Posterior cingulate gyrus (tissue), 11 donors: ENCODE measurements at regions of chr6 and their contacts with region 1.

Region 1: GRCh38 chr6:42217519-42218367 is at the start of gene MRPS10:
- DNase-seq: peak; percentile 87 to 99 (median 94)

Region 2: DNA sequence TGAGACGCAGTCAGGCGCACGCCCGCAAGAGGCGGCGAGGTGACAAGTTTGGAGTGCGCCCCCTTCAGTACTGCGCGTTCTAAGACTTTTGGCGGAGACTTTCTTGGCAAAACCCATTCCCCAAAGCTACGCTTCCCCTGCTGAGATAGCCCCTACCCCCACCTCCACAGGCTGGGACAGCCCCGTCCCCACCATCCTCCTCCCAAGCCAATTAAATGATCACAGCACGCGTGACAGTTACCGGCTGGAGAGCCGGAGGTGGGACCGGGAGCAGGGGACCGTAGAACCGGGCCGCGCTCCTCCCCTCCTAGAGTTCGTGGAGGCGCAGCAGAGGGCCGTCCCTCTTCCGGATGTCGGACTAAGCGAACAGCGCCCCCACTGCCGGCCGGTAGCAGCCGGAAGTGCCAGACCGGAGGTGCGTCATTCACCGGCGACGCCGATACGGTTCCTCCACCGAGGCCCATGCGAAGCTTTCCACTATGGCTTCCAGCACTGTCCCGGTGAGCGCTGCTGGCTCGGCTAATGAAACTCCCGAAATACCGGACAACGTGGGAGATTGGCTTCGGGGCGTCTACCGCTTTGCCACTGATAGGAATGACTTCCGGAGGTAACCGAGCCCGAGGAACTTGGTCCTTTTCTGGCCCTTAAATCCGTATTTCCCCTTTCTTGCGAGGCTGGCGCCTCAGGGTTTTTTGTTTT is 430.4 kb before region 1 on chr6 and contains the start of gene TOMM6:
- intact Hi-C with region 1: loop called (anchors 10 kb)
- DNase-seq: peak; percentile 90 to 99 (median 94)

Region 3: GRCh38 chr6:41920921-41921711 is 296.6 kb before region 1 on chr6 and contains the starts of genes BYSL and MED20:
- intact Hi-C with region 1: loop called (anchors 5 kb)
- DNase-seq: peak; percentile 91 to 99 (median 96)

Region 4: GRCh38 chr6:42050266-42051032 is 167.3 kb before region 1 on chr6 and contains the start of gene TAF8:
- intact Hi-C with region 1: loop called (anchors 5 kb)
- DNase-seq: peak; percentile 88 to 98 (median 90)

Region 5: GRCh38 chr6:42075159-42075838 is 142.4 kb before region 1 on chr6:
- intact Hi-C with region 1: loop called (anchors 10 kb)
- DNase-seq: peak; percentile 60 to 96 (median 75)

Region 6: GRCh38 chr6:42547407-42548329 is 329.9 kb after region 1 on chr6:
- intact Hi-C with region 1: loop called (anchors 5 kb)
- DNase-seq: peak; percentile 82 to 98 (median 88)